ENCODE measurements at regions of chr10 and their contacts with region 1.

Region 1: GRCh38 chr10:109126016-109126415 is 797.3 kb downstream of the XPNPEP1 start:
- DNase-seq: no peak
- H3K4me3 ChIP-seq: no peak overlapping the region
- H3K27ac ChIP-seq: no peak overlapping the region
- H3K4me1 ChIP-seq: no peaks in the 10 kb centered on the region
- H3K27me3 ChIP-seq: no peaks in the 10 kb centered on the region
- CTCF ChIP-seq: no peak
- EP300 ChIP-seq: no peak
- POLR2A ChIP-seq: no peak

Region 2: GRCh38 chr10:109114579-109114978 is 11.4 kb before region 1 on chr10:
- intact Hi-C with region 1: loop called in 1 of 4 experiments (anchors 1 kb)
- DNase-seq: no peak
- H3K4me3 ChIP-seq: no peak overlapping the region
- H3K27ac ChIP-seq: no peak overlapping the region
- H3K4me1 ChIP-seq: no peaks in the 10 kb centered on the region
- H3K27me3 ChIP-seq: no peaks in the 10 kb centered on the region
- CTCF ChIP-seq: no peak
- EP300 ChIP-seq: no peak
- POLR2A ChIP-seq: no peak